WTC11 (cell line): ENCODE measurements at regions of chr11 and their contacts with region 1.

Region 1: DNA sequence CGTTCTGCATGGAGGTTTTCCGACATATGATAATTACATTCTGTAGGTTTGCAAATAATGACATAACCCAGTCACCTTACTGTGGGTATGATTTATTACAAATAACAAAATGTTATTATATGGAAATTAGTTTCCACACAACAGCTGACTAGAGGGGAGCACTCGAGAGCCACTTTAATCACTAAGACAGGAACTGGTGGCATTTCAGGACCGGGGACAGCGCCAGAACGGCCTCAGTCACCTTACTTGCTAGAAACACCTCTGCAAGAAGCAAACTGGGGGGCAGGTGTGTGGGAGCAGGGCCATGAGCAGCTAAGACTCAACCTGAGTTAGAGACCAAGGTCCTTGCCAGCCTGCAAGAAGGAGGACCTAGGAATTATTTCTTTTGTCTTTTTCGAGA is 199.9 kb downstream of the DSCAML1 start:
- DNase-seq: peak; percentile 84
- ATAC-seq: peak; percentile 33; the same call in 1 of the 2 replicates
- H3K4me3 Mint-ChIP-seq: no peak overlapping the region
- H3K27ac Mint-ChIP-seq: no peak overlapping the region
- H3K4me1 Mint-ChIP-seq: peaks cover 29% of the 10 kb centered on the region
- H3K27me3 Mint-ChIP-seq: no peaks in the 10 kb centered on the region
- CTCF ChIP-seq: no peak

Region 2: DNA sequence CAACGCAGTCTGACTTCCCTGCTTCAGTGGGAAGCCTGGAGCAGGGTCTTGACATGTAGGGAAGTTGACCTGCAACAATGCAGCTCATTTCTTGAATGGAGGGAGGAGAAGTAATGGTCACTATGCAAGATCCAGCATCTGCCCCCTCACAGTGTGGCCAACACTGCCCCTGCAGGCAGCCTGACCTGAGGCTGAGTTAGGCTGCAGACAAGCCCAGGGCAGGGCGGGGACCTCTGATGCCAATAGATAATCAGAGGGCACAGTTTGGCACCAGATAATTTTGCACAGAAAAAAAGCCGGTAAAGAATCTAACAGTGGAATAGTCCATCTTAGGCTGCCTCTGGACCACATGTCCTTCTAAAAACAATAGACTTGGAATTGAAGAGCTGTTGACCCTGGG is 17.7 kb after region 1 on chr11:
- CTCF ChIA-PET with region 1: interaction called, 18 read pairs
- POLR2A ChIA-PET with region 1: no interaction called
- DNase-seq: peak; percentile 29
- ATAC-seq: peak; percentile 28; the same call in 1 of the 2 replicates
- H3K4me3 Mint-ChIP-seq: no peak overlapping the region
- H3K27ac Mint-ChIP-seq: no peak overlapping the region
- H3K4me1 Mint-ChIP-seq: peaks cover 53% of the 10 kb centered on the region
- H3K27me3 Mint-ChIP-seq: no peaks in the 10 kb centered on the region; the same call in 1 of the 2 replicates
- CTCF ChIP-seq: no peak

Region 3: DNA sequence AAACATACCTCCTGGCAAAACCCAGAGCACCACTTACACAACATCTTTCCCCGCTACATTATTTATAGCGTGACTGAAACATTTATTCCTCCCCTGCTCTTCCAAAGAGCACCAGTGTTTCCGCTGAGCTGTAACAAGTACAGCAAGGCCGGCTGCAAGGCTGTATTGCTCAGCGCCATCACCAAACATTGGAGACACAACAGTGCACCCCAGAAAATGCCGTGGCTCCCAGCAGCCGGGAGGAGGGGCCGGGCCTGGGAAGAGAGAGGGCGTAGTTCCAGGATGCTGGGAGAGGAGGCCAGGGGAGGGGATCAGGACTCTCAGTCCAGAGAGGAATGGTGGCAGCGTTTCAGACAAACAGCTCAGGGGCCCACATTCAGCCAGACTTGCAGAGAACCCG is 66.8 kb after region 1 on chr11:
- CTCF ChIA-PET with region 1: no interaction called
- POLR2A ChIA-PET with region 1: no interaction called
- DNase-seq: no peak
- ATAC-seq: peak; percentile 62
- H3K4me3 Mint-ChIP-seq: no peak overlapping the region
- H3K27ac Mint-ChIP-seq: no peak overlapping the region
- H3K4me1 Mint-ChIP-seq: peaks cover 28% of the 10 kb centered on the region
- H3K27me3 Mint-ChIP-seq: no peaks in the 10 kb centered on the region
- CTCF ChIP-seq: no peak